CD8-positive, alpha-beta memory T cell (primary cell): ENCODE measurements at regions of chr2 and their contacts with region 1.

Region 1: DNA sequence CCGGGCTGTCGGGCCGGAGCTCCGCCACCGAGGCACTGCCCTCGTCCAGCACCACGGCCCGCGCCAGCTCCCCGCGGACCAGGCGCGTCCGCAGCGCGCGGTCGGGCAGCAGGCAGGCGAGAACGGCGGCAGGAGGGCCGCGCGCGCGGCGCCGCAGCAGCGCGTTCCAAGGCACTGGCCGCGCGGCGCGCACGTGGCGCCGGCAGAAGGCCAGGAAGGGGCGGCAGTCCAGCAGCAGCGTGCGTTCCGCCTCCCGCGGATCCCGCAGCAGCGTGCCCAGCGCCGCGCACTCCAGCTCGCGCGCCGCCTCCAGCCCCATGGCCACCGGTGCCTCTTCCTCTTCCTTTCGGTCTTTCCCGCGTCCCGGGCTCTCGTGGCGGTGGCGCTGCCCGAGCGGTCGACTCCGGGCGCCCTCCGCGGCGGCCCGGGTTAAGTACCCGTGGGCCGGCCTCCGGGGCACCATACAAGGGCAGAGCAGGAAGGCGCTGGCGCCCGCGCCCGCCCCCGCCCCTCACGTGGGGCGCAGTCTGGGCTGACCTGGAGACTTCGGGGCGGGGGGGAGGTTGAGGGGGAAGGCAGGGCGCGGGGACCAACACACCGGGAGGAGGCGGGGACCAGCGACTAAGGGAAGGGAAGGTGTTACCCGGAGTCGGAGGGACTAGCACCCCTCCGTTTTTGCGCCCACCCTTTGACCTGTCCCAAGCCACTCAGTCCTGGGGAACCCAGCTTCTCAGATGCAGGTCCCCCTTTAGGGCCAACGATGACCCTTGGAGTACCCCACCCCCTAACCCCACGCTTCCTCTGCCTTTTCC is at the start of gene DUSP2:
- DNase-seq: peak; percentile 83 to 93 (median 88)
- H3K4me3 ChIP-seq: peak within 1 kb of the TSS; percentile 89
- H3K4me3 Mint-ChIP-seq: peak within 1 kb of the TSS; percentile 94 to 100 (median 97)
- H3K27ac ChIP-seq: peak within 1 kb of the TSS; percentile 95
- H3K27ac Mint-ChIP-seq: peak within 1 kb of the TSS; percentile 93 to 100 (median 98)
- H3K4me1 ChIP-seq: peaks cover 56% of the 10 kb centered on the region
- H3K4me1 Mint-ChIP-seq: peaks cover 65 to 73% (median 67%) of the 10 kb centered on the region in 3 donors
- H3K27me3 ChIP-seq: no peaks in the 10 kb centered on the region
- H3K27me3 Mint-ChIP-seq: peaks cover 0 to 17% of the 10 kb centered on the region in 2 donors
- total RNA-seq, gene DUSP2: 214 to 237 TPM

Region 2: GRCh38 chr2:96083064-96083939 is 61.9 kb before region 1 on chr2:
- CTCF ChIA-PET with region 1: no interaction called
- POLR2A ChIA-PET with region 1: no interaction called
- DNase-seq: no peak
- H3K4me3 ChIP-seq: no peak overlapping the region
- H3K4me3 Mint-ChIP-seq: no peak overlapping the region
- H3K27ac ChIP-seq: no peak overlapping the region
- H3K27ac Mint-ChIP-seq: peak overlapping the region in 1 of 8 donors; percentile 52
- H3K4me1 ChIP-seq: no peaks in the 10 kb centered on the region
- H3K4me1 Mint-ChIP-seq: no peaks in the 10 kb centered on the region
- H3K27me3 ChIP-seq: no peaks in the 10 kb centered on the region
- H3K27me3 Mint-ChIP-seq: peaks cover 10 to 27% of the 10 kb centered on the region in 2 donors

Region 3: DNA sequence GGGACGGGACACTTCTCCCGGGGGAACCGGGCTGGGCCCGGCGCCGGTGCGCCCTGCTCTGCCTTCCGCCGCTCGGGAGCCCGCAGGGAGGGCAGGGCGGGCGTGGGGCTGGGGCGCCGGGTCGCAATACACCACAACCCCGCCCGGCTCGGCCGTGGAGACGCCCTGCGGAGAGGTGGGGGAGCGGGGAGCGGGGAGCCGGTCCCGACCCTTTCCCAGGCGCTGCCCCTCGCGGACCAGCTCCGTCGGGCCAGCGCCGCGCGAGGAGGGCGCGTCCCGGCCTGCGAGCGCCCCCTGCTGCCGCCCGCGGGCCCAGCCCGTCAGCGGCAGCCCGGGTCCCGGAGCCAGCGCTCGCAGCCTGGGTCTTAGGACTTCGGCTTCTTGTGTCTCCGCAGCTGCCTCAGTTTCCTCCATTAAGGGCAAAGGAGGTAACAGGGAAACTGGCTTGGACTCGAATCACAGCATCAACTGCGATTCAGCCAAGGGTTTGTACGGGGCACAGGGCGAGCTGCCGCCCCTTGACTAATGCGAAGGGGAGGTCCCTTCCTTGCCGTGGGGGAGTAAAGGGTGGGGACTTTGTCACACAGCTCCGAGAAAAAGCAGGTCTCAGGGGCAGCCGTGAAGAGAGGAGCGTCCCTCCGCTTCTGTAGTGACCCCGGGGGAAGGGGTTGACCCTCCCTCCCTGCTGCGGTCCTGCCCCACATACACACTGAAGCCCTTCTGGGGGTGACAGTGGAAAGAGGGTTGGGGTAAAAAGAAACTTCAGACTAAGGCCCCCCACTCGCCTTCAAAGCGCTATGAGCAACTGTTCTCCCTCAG is 28.2 kb before region 1 on chr2:
- CTCF ChIA-PET with region 1: interaction called, 16 read pairs
- POLR2A ChIA-PET with region 1: interaction called, 5 read pairs
- DNase-seq: peak; percentile 48 to 72 (median 63)
- H3K4me3 ChIP-seq: peak overlapping the region; percentile 29
- H3K4me3 Mint-ChIP-seq: peak overlapping the region; percentile 47 to 87 (median 75)
- H3K27ac ChIP-seq: no peak overlapping the region
- H3K27ac Mint-ChIP-seq: peak overlapping the region in 4 of 8 donors; percentile 27 to 47 (median 30)
- H3K4me1 ChIP-seq: peaks cover 7% of the 10 kb centered on the region
- H3K4me1 Mint-ChIP-seq: peaks cover 9 to 35% (median 11%) of the 10 kb centered on the region in 3 donors
- H3K27me3 ChIP-seq: no peaks in the 10 kb centered on the region
- H3K27me3 Mint-ChIP-seq: peaks cover 19% of the 10 kb centered on the region in 2 donors

Region 4: GRCh38 chr2:96157651-96158553 is 12.7 kb after region 1 on chr2:
- CTCF ChIA-PET with region 1: interaction called, 27 read pairs
- POLR2A ChIA-PET with region 1: interaction called, 78 read pairs
- DNase-seq: peak; percentile 51 to 89 (median 68)
- H3K4me3 ChIP-seq: peak overlapping the region; percentile 51
- H3K4me3 Mint-ChIP-seq: peak overlapping the region; percentile 13 to 88 (median 74)
- H3K27ac ChIP-seq: peak overlapping the region; percentile 58
- H3K27ac Mint-ChIP-seq: peak overlapping the region; percentile 89 to 98 (median 96)
- H3K4me1 ChIP-seq: peaks cover 68% of the 10 kb centered on the region
- H3K4me1 Mint-ChIP-seq: peaks cover 67 to 93% (median 69%) of the 10 kb centered on the region in 3 donors
- H3K27me3 ChIP-seq: no peaks in the 10 kb centered on the region
- H3K27me3 Mint-ChIP-seq: no peaks in the 10 kb centered on the region

Region 5: DNA sequence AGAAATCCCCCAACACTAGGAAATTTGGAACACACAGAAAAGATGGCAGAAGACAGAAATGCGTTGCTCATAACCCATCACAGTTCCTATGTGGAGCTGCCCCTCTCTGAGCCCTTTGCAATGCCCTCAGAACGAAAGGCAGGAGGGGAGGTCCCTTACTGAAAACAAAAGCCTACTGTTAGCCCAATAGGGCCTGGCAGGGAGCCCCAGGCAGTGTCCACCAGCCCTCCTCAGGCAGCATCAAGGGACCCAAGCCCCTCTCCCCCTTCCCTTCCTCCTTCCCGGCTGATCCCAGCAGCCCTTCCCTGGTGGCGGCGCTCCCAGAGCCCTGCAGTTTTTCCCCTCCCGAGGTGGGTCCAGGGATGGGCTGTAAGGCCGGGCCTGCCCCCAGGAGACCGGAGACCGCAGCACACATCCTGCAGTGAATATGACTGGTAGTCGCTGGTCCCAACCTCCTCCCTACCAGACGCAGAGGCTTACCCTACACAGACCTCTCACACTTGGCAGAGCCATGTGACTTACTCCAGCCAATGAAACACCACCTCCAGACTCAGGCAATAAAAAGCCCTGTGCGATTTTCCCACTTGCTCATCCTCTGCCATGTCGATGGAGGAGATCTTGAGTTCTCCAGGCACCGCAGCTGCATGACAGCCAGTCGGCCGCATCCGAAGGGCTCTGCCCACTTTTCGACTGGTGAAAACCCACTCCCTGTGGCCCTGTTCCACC is 19.4 kb after region 1 on chr2:
- CTCF ChIA-PET with region 1: interaction called, 385 read pairs
- POLR2A ChIA-PET with region 1: interaction called, 78 read pairs
- DNase-seq: peak; percentile 51 to 85 (median 68)
- H3K4me3 ChIP-seq: peak overlapping the region; percentile 54
- H3K4me3 Mint-ChIP-seq: peak overlapping the region; percentile 79 to 94 (median 84)
- H3K27ac ChIP-seq: peak overlapping the region; percentile 80
- H3K27ac Mint-ChIP-seq: peak overlapping the region; percentile 88 to 100 (median 92)
- H3K4me1 ChIP-seq: peaks cover 54% of the 10 kb centered on the region
- H3K4me1 Mint-ChIP-seq: peaks cover 58 to 80% (median 67%) of the 10 kb centered on the region in 3 donors
- H3K27me3 ChIP-seq: no peaks in the 10 kb centered on the region
- H3K27me3 Mint-ChIP-seq: no peaks in the 10 kb centered on the region

Region 6: GRCh38 chr2:96195410-96196066 is 50.3 kb after region 1 on chr2:
- CTCF ChIA-PET with region 1: no interaction called
- POLR2A ChIA-PET with region 1: no interaction called
- DNase-seq: no peak
- H3K4me3 ChIP-seq: no peak overlapping the region
- H3K4me3 Mint-ChIP-seq: no peak overlapping the region
- H3K27ac ChIP-seq: no peak overlapping the region
- H3K27ac Mint-ChIP-seq: peak overlapping the region in 4 of 8 donors; percentile 38 to 64 (median 46)
- H3K4me1 ChIP-seq: peaks cover under 1% of the 10 kb centered on the region
- H3K4me1 Mint-ChIP-seq: peaks cover 38 to 70% (median 56%) of the 10 kb centered on the region in 3 donors
- H3K27me3 ChIP-seq: no peaks in the 10 kb centered on the region
- H3K27me3 Mint-ChIP-seq: no peaks in the 10 kb centered on the region

Region 7: GRCh38 chr2:96251721-96252292 is 106.6 kb after region 1 on chr2:
- CTCF ChIA-PET with region 1: no interaction called
- POLR2A ChIA-PET with region 1: no interaction called
- DNase-seq: no peak
- H3K4me3 ChIP-seq: no peak overlapping the region
- H3K4me3 Mint-ChIP-seq: no peak overlapping the region
- H3K27ac ChIP-seq: no peak overlapping the region
- H3K27ac Mint-ChIP-seq: peak overlapping the region in 7 of 8 donors; percentile 7 to 86 (median 61)
- H3K4me1 ChIP-seq: peaks cover 6% of the 10 kb centered on the region
- H3K4me1 Mint-ChIP-seq: peaks cover 15 to 23% (median 15%) of the 10 kb centered on the region in 3 donors
- H3K27me3 ChIP-seq: no peaks in the 10 kb centered on the region
- H3K27me3 Mint-ChIP-seq: no peaks in the 10 kb centered on the region

Region 8: DNA sequence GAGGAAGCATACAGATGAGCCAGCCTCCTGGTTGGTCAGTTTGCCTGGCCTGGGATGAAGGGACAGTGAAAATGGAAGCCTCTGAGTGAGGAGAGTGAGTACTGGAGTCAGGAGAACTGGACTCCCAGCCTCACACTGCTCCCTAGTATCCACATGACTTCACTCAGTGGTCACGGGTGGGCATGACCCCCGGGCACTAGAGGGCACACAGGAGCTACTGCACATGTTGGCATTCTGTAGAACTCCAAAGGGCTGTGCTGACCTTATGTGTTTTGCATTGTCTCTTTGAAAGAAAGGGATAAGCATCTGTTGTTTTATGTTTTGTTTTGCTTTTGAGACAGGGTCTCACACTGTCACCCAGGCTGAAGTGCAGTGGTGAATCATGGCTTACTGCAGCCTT is 214.1 kb after region 1 on chr2:
- CTCF ChIA-PET with region 1: no interaction called
- POLR2A ChIA-PET with region 1: no interaction called
- DNase-seq: peak in 4 of 5 donors; percentile 18 to 68 (median 42)
- H3K4me3 ChIP-seq: no peak overlapping the region
- H3K4me3 Mint-ChIP-seq: peak overlapping the region in 1 of 7 donors; percentile 45
- H3K27ac ChIP-seq: no peak overlapping the region
- H3K27ac Mint-ChIP-seq: peak overlapping the region in 7 of 8 donors; percentile 7 to 93 (median 75)
- H3K4me1 ChIP-seq: peaks cover 7% of the 10 kb centered on the region
- H3K4me1 Mint-ChIP-seq: peaks cover 6 to 22% (median 20%) of the 10 kb centered on the region in 3 donors
- H3K27me3 ChIP-seq: no peaks in the 10 kb centered on the region
- H3K27me3 Mint-ChIP-seq: no peaks in the 10 kb centered on the region